ENCODE measurements at regions of chr7 and their contacts with region 1.

Region 1: GRCh38 chr7:105013221-105013815 is 687 bp upstream of the KMT2E start:
- DNase-seq: peak; percentile 91 to 97 (median 94)
- ATAC-seq: peak; percentile 69
- H3K4me3 ChIP-seq: peak overlapping the region; percentile 78
- H3K27ac ChIP-seq: peak overlapping the region; percentile 98
- H3K4me1 ChIP-seq: peaks cover 17 to 30% of the 10 kb centered on the region in 2 experiments
- H3K27me3 ChIP-seq: no peaks in the 10 kb centered on the region
- CTCF ChIP-seq: peak; percentile 70 to 82 (median 74)
- EP300 ChIP-seq: peak; percentile 15; the same call in 1 of the 2 replicates
- POLR2A ChIP-seq: peak; percentile 100
- RAD21 ChIP-seq: no peak

Region 2: DNA sequence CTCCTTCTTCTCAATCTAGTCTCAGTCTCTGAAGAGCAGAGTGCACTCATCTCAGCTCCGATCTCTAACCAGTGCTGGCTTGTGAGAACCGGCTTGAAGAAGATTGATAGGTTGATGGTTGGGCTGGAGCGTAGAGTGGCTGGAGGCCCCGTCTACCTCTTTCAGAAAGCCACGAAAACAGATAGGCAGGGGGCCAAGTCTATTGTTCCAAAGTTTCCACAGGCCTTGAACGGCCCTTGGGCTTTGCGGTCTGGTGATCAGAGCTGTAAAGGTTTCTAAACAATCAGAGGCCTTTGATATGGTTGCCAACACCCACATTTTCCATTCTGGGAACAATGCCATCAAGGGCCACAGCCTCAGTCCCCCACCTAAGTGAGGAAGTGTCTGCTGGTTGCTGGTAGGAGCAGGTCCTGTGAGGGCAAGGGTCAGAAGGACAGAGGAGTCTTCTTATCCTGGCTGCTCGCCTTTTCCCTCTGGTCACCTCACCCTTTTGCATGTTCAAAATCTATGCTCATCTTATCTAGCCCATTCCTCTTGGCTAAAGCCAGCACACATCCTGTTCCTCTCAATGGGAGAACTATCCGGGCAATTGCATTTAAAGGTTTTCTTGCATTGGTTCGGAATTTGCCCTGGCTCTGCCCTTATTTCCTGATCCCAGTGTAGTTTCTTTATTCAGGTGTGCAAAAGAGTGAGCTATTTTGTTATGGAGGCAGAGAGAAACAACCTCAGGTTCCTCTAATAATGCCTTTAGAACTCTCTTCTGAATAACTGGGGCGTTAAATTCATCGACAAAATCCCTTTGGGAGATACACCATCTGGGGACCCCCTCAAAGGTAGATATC is 69.6 kb before region 1 on chr7:
- CTCF ChIA-PET with region 1: no interaction called
- POLR2A ChIA-PET with region 1: interaction called, 4 read pairs
- in situ Hi-C with region 1: no loop called
- intact Hi-C with region 1: loop called (anchors 1 kb)
- DNase-seq: peak; percentile 76 to 95 (median 83)
- ATAC-seq: peak; percentile 87
- H3K4me3 ChIP-seq: no peak overlapping the region
- H3K27ac ChIP-seq: peak overlapping the region; percentile 63; the same call in 2 of the 3 replicates
- H3K4me1 ChIP-seq: peaks cover 20 to 23% of the 10 kb centered on the region in 2 experiments
- H3K27me3 ChIP-seq: peaks cover 0 to 8% of the 10 kb centered on the region in 2 experiments; a peak in 2 of 5 replicates
- CTCF ChIP-seq: no peak
- EP300 ChIP-seq: peak; percentile 45
- POLR2A ChIP-seq: no peak
- RAD21 ChIP-seq: peak in 1 of 2 experiments; percentile 2; a peak in 1 of 4 replicates

Region 3: GRCh38 chr7:104993217-104993862 is 20.0 kb before region 1 on chr7:
- CTCF ChIA-PET with region 1: no interaction called
- POLR2A ChIA-PET with region 1: interaction called, 73 read pairs
- in situ Hi-C with region 1: no loop called
- intact Hi-C with region 1: no loop called
- DNase-seq: no peak
- ATAC-seq: peak; percentile 13; the same call in 1 of the 3 replicates
- H3K4me3 ChIP-seq: no peak overlapping the region
- H3K27ac ChIP-seq: no peak overlapping the region
- H3K4me1 ChIP-seq: no peaks in the 10 kb centered on the region
- H3K27me3 ChIP-seq: no peaks in the 10 kb centered on the region
- CTCF ChIP-seq: no peak
- EP300 ChIP-seq: no peak
- POLR2A ChIP-seq: no peak
- RAD21 ChIP-seq: no peak

Region 4: GRCh38 chr7:105024743-105025142 is 11.4 kb after region 1 on chr7:
- CTCF ChIA-PET with region 1: no interaction called
- POLR2A ChIA-PET with region 1: interaction called, 144 read pairs
- in situ Hi-C with region 1: no loop called
- intact Hi-C with region 1: no loop called
- DNase-seq: no peak
- ATAC-seq: peak; percentile 37
- H3K4me3 ChIP-seq: no peak overlapping the region
- H3K27ac ChIP-seq: no peak overlapping the region
- H3K4me1 ChIP-seq: peaks cover 4 to 11% of the 10 kb centered on the region in 2 experiments; a peak in 2 of 5 replicates
- H3K27me3 ChIP-seq: no peaks in the 10 kb centered on the region
- CTCF ChIP-seq: no peak
- EP300 ChIP-seq: no peak
- POLR2A ChIP-seq: no peak
- RAD21 ChIP-seq: no peak

Region 5: DNA sequence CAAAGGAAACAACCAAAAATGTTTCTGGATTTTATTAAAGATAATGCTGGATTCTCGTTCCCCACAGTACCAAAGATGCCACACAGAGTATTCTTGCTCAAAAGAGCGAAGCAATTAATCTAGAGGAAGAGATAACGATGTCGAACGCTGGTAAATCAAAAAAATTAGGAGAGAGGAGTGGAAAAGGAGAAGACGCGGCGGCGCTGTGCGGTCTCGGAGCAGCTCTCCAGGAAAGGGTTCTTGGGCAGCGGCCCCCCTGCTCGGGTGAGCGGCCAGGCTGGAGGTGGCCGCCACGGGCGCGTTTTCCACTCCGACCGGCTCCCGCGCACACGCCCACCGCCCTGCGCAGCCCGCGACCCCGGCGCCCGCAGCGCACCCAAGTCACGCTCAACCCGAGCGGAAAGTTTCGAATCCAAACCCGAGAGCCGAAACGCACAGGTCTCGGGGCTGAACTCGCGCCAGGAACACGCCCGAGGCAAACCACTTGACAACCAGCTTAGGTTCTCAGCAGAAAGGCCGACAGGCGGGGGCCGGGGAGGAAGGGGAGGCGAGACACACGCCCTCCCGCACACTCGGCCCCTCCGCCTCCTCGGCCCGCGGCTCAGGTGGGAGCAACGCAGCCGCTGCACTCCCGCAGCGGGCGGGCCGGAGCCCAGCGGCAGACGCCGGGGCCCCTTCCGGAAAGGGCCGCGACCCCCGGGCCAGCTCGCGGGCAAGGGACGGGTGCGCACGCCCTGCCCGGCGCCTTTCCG is 374.5 kb after region 1 on chr7:
- CTCF ChIA-PET with region 1: no interaction called
- POLR2A ChIA-PET with region 1: interaction called, 3 read pairs
- in situ Hi-C with region 1: no loop called
- intact Hi-C with region 1: loop called (anchors 10 kb)
- DNase-seq: peak in 3 of 4 experiments; percentile 79 to 84 (median 81)
- ATAC-seq: peak; percentile 80
- H3K4me3 ChIP-seq: peak overlapping the region; percentile 90
- H3K27ac ChIP-seq: peak overlapping the region; percentile 77
- H3K4me1 ChIP-seq: peaks cover 13 to 15% of the 10 kb centered on the region in 2 experiments; a peak in 4 of 5 replicates
- H3K27me3 ChIP-seq: no peaks in the 10 kb centered on the region
- CTCF ChIP-seq: no peak
- EP300 ChIP-seq: no peak
- POLR2A ChIP-seq: no peak
- RAD21 ChIP-seq: no peak

Region 6: DNA sequence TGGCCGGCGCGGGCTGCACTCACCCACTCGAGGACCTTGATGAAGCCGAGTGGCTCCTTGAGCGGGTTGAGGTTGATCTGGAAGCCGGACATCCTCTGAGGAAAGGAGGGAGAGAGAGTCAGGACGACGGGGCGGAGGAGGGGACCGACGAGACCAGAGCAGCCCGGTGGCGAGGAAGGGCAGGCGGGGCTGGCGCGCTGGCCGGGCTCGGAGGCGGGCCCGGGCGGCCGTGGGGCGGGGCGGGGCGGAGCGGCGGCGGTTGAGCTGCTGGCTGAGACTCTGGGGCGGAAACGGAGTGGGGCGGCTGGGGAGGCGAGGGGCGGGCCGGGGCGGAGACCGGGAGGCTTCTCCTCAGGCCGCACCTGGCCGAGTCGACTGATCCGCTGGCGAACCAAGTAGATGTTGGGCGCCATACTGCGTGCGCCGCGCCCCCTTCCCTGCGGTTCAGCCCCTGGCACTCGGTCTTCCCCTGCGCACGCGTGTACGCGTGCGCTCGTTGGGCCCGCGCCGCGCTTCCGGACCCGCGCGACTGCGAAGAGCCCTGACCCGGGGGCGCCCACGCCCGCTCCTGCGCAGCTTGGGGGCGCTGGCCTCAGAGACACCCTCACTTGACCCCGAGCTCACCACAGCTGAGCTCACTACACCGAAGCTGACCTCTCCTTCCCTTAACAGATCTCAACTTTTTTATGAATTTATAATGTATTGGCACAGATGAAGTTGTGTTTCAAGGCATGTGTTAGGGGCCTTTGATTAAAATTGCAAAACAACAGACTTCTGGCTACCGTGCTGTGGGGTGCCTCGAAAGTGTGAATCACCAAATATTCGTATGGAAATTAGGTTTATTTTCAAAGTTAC is 1099.0 kb after region 1 on chr7 and contains the start of gene SYPL1:
- CTCF ChIA-PET with region 1: no interaction called
- POLR2A ChIA-PET with region 1: no interaction called
- in situ Hi-C with region 1: no loop called
- intact Hi-C with region 1: loop called (anchors 2 kb)
- DNase-seq: peak; percentile 96 to 98 (median 97)
- ATAC-seq: peak; percentile 93
- H3K4me3 ChIP-seq: peak within 1 kb of the TSS; percentile 79
- H3K27ac ChIP-seq: peak within 1 kb of the TSS; percentile 92
- H3K4me1 ChIP-seq: peaks cover 14 to 19% of the 10 kb centered on the region in 2 experiments
- H3K27me3 ChIP-seq: no peaks in the 10 kb centered on the region
- CTCF ChIP-seq: peak in 2 of 3 experiments; percentile 11 to 54; a peak in 3 of 6 replicates
- EP300 ChIP-seq: peak; percentile 27; the same call in 1 of the 2 replicates
- POLR2A ChIP-seq: peak; percentile 86
- RAD21 ChIP-seq: no peak; a peak in 2 of 4 replicates
- polyA plus RNA-seq, gene SYPL1: 171 to 214 TPM

Measured in K562 (cell line).